ENCODE measurements at regions of chr1 and their contacts with region 1.

Region 1: DNA sequence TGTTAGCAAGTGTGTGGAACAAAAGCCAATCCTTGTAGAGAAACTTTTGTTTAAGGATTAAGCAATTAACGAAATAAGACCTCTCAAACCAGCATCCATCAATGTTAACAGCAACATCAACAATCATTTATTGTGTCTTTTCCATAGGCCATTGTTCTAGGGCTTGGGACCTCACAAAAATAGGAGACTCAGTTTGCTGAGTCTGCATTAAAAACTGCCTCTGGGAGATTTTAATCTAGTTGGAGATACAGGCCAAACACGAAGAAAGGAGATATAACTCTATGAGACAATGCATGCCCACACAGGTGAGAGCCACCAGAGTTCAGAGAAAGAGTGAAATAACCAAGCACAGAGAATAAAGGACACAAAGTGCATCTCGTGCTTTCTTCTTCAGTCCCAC is 14.4 kb upstream of the SELP start:
- DNase-seq: no peak
- H3K4me3 ChIP-seq: no peak overlapping the region
- H3K27ac ChIP-seq: no peak overlapping the region
- H3K4me1 ChIP-seq: no peaks in the 10 kb centered on the region
- CTCF ChIP-seq: no peak

Region 2: DNA sequence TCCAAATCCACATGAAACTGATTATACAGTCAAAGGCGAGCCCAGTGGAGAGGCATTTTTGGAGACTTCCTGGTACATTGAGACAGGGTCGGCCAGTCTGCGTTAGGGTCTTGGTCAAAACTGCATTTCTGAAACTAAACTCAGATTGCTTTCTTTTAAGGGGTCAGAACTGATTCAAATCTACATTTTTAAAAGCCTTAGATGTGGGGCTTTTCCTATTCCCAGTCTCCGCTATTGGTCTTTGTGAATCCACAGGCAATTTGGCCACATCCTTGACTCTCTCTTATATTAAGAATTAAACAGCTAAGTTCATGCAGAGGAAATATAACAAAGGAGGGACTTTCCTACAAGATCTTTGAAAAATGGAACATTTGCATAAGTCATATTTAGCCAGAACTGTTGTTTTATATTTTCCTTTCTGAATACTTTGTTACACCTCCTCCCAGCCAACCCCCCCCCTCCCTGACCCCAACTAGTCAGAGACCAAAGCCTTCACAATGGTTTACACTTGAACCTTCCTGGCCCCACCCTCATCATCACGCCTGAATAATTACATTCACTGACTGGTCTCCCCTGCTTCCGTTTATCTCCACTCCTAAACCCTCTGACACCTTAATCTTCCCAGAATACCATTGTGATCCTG is 36.2 kb after region 1 on chr1:
- CTCF ChIA-PET with region 1: no interaction called
- POLR2A ChIA-PET with region 1: interaction called, 10 read pairs
- intact Hi-C with region 1: no loop called
- DNase-seq: peak; percentile 67
- H3K4me3 ChIP-seq: peak overlapping the region; percentile 45
- H3K27ac ChIP-seq: peak overlapping the region; percentile 75
- H3K4me1 ChIP-seq: peaks cover 68% of the 10 kb centered on the region
- CTCF ChIP-seq: no peak

Measured in OCI-LY7 (cell line).